Activated CD4-positive, alpha-beta T cell treated with anti-CD3 and anti-CD28 coated beads, Interleukin-2, amount 10 ng/mL, durations not matched to agents 24 days and 14 days (primary cell): ENCODE measurements at regions of chr1 and their contacts with region 1.

Region 1: GRCh38 chr1:26864610-26865527 is 1.9 kb downstream of the SFN start:
- DNase-seq: peak; percentile 99
- H3K4me3 Mint-ChIP-seq: peak overlapping the region; percentile 89
- H3K27ac Mint-ChIP-seq: peak overlapping the region; percentile 90
- H3K4me1 Mint-ChIP-seq: peaks cover 28% of the 10 kb centered on the region
- H3K27me3 Mint-ChIP-seq: no peaks in the 10 kb centered on the region

Region 2: DNA sequence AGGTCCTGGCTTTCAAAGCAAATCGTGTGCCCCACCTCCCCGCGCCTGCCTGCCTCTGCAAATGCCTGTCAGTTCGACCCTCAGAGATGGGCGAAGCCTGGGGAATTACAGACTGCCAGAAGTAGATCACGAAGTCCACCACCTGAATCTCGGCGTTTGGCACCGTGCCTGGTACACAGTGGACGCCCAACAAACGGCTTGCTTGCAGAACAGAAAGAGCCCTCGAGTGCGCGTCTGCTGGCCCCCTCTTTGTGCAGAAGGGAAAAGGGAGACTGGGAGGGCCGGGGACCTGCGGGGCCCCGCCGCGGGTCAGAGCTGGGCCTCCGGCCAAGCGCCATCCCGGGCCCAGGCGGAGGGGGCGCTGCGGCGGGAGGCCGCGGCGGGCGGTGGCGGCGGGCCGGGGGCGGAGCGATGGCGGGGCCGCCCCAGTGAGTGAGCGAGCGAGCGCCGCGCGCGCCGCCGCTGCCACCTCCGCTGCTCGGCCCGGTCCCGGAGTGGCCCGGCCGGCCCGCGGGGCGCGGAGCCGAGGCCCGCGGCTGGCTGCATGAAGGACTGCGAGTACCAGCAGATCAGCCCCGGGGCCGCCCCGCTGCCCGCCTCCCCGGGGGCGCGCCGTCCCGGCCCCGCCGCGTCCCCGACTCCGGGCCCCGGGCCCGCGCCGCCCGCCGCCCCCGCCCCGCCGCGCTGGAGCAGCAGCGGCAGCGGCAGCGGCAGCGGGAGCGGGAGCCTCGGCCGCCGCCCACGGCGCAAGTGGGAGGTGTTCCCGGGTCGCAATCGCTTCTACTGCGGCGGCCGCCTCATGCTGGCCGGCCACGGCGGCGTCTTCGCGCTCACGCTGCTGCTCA is 38.4 kb before region 1 on chr1 and contains the start of gene ZDHHC18:
- intact Hi-C with region 1: loop called (anchors 2 kb)
- DNase-seq: peak; percentile 95
- H3K4me3 Mint-ChIP-seq: peak within 1 kb of the TSS; percentile 94
- H3K27ac Mint-ChIP-seq: peak within 1 kb of the TSS; percentile 95
- H3K4me1 Mint-ChIP-seq: peaks cover 45% of the 10 kb centered on the region
- H3K27me3 Mint-ChIP-seq: no peaks in the 10 kb centered on the region
- total RNA-seq, gene ZDHHC18: 75.9 and 77.3 TPM in 2 replicates

Region 3: DNA sequence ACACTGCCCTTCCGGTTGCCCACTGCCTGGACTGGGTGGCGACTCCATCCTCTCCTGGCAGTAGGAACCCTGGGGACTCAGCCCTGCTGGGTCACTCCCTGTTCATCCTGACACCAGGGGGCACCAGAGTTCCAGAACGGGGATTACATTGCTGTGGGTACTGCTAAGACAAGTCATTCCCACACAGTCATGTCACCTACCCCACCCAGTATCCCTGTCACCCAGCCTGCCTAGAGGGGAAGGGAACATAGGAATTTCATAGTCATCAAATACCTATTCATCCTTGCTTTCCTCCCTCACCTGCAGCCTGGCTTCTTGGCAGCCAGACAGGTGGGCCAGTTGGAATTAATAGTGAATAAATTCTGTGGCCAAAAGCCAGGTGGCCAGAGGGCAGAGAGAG is 11.7 kb before region 1 on chr1:
- intact Hi-C with region 1: loop called (anchors 1 kb)
- DNase-seq: peak; percentile 93
- H3K4me3 Mint-ChIP-seq: no peak overlapping the region
- H3K27ac Mint-ChIP-seq: no peak overlapping the region
- H3K4me1 Mint-ChIP-seq: peaks cover 1% of the 10 kb centered on the region
- H3K27me3 Mint-ChIP-seq: no peaks in the 10 kb centered on the region

Region 4: DNA sequence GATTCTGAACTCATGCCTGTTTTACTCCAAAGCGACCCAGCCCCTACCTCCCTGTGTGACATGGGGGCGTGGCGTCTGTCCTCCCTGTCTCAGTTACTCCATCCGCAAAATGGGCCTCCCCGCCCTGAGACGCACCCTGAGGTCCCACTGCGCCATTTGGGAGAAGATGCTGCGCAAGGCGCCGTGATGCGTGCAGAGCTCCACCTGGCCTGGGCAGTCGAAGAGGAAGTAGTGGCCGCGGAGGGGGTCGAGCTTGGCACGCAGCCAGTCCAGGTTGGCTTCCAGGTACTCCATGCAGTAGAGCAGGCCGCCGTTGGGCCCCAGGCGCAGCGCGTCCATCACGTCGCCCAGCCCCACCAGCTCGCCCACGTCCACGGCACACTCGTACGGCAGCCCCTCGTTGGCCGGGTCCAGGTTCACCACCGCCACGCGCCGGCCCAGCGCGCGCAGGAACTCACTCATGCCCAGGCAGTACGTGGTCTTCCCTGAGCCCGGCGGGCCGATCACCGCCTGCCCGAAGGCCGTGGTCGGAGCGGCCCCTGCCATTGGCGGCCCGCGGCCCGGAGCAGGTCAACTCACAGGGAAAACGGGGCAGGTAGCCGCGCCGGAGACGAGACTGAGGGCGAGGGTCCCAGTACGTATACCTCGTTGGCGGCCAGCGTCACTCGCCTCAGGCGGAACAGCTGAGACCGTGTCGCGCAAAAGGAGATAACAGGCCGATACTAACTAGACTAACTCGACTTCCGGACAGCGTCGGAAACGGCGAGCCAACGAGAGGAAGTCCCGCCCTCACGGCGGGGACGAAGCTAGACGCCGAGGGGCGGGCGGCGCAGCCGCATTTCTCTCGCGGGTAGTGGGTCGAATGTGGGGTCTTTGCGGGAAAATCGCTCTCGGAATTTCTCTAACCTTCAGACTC is 24.9 kb after region 1 on chr1 and contains the start of gene GPN2:
- intact Hi-C with region 1: loop called (anchors 1 kb)
- DNase-seq: peak; percentile 95
- H3K4me3 Mint-ChIP-seq: peak within 1 kb of the TSS; percentile 96
- H3K27ac Mint-ChIP-seq: peak within 1 kb of the TSS; percentile 94
- H3K4me1 Mint-ChIP-seq: peaks cover 22% of the 10 kb centered on the region
- H3K27me3 Mint-ChIP-seq: no peaks in the 10 kb centered on the region
- total RNA-seq, gene GPN2: 41.8 and 47.1 TPM in 2 replicates